T-cell (primary cell): ENCODE measurements at regions of chr17 and their contacts with region 1.

Region 1: GRCh38 chr17:75109407-75110233 is at the start of gene ARMC7:
- DNase-seq: peak; percentile 77 to 94 (median 86)
- ATAC-seq: peak; percentile 83 to 84 (median 84)
- H3K4me3 ChIP-seq: peak within 1 kb of the TSS; percentile 71 to 85
- H3K4me3 Mint-ChIP-seq: peak within 1 kb of the TSS; percentile 83 to 88 (median 87)
- H3K27ac ChIP-seq: peak within 1 kb of the TSS; percentile 65
- H3K27ac Mint-ChIP-seq: peak within 1 kb of the TSS; percentile 91 to 93
- H3K4me1 ChIP-seq: peaks cover 13 to 43% of the 10 kb centered on the region in 2 experiments
- H3K4me1 Mint-ChIP-seq: peaks cover 37 to 41% (median 39%) of the 10 kb centered on the region in 3 donors
- H3K27me3 ChIP-seq: no peaks in the 10 kb centered on the region
- H3K27me3 Mint-ChIP-seq: no peaks in the 10 kb centered on the region
- total RNA-seq, gene ARMC7: 8.9 to 23.9 (median 18.8) TPM

Region 2: GRCh38 chr17:75012346-75013091 is 97.1 kb before region 1 on chr17 and contains the start of gene MRPL58:
- CTCF ChIA-PET with region 1: interaction called in 1 of 2 experiments, 11 read pairs
- POLR2A ChIA-PET with region 1: no interaction called
- DNase-seq: peak; percentile 56 to 87 (median 73)
- ATAC-seq: peak; percentile 94 to 98 (median 96)
- H3K4me3 ChIP-seq: peak within 1 kb of the TSS; percentile 67 to 94
- H3K4me3 Mint-ChIP-seq: peak within 1 kb of the TSS; percentile 92 to 94 (median 93)
- H3K27ac ChIP-seq: peak within 1 kb of the TSS; percentile 72
- H3K27ac Mint-ChIP-seq: peak within 1 kb of the TSS; percentile 85 to 86
- H3K4me1 ChIP-seq: peaks cover 6 to 20% of the 10 kb centered on the region in 2 experiments
- H3K4me1 Mint-ChIP-seq: peaks cover 33 to 39% (median 39%) of the 10 kb centered on the region in 3 donors
- H3K27me3 ChIP-seq: peaks cover 0 to 4% of the 10 kb centered on the region in 2 experiments
- H3K27me3 Mint-ChIP-seq: no peaks in the 10 kb centered on the region
- total RNA-seq, gene MRPL58: 15.6 to 30.6 (median 26.6) TPM

Region 3: GRCh38 chr17:75059369-75060345 is 50.0 kb before region 1 on chr17:
- CTCF ChIA-PET with region 1: interaction called, 7 to 11 read pairs
- POLR2A ChIA-PET with region 1: interaction called in 1 of 2 experiments, 9 read pairs
- DNase-seq: peak in 2 of 35 experiments; percentile 17 to 51
- ATAC-seq: peak; percentile 70 to 92 (median 74)
- H3K4me3 ChIP-seq: no peak overlapping the region
- H3K4me3 Mint-ChIP-seq: no peak overlapping the region
- H3K27ac ChIP-seq: no peak overlapping the region
- H3K27ac Mint-ChIP-seq: peak overlapping the region; percentile 46 to 61
- H3K4me1 ChIP-seq: no peaks in the 10 kb centered on the region
- H3K4me1 Mint-ChIP-seq: peaks cover 10 to 18% (median 12%) of the 10 kb centered on the region in 3 donors
- H3K27me3 ChIP-seq: no peaks in the 10 kb centered on the region
- H3K27me3 Mint-ChIP-seq: no peaks in the 10 kb centered on the region

Region 4: GRCh38 chr17:75131280-75132017 is 21.8 kb after region 1 on chr17 and contains the start of gene NT5C:
- CTCF ChIA-PET with region 1: interaction called, 7 to 13 read pairs
- POLR2A ChIA-PET with region 1: interaction called, 5 to 11 read pairs
- DNase-seq: peak in 25 of 35 experiments; percentile 12 to 73 (median 39)
- ATAC-seq: peak; percentile 79 to 84 (median 83)
- H3K4me3 ChIP-seq: peak within 1 kb of the TSS; percentile 78 to 82
- H3K4me3 Mint-ChIP-seq: peak within 1 kb of the TSS; percentile 84 to 89 (median 87)
- H3K27ac ChIP-seq: peak within 1 kb of the TSS; percentile 80
- H3K27ac Mint-ChIP-seq: peak within 1 kb of the TSS; percentile 89 to 91
- H3K4me1 ChIP-seq: peaks cover 0 to 35% of the 10 kb centered on the region in 2 experiments
- H3K4me1 Mint-ChIP-seq: peaks cover 14 to 20% (median 15%) of the 10 kb centered on the region in 3 donors
- H3K27me3 ChIP-seq: no peaks in the 10 kb centered on the region
- H3K27me3 Mint-ChIP-seq: no peaks in the 10 kb centered on the region
- total RNA-seq, gene NT5C: 21.5 to 88.8 (median 70.1) TPM

Region 5: GRCh38 chr17:75173526-75173925 is 63.9 kb after region 1 on chr17:
- CTCF ChIA-PET with region 1: interaction called, 10 to 78 read pairs
- POLR2A ChIA-PET with region 1: interaction called in 1 of 2 experiments, 3 read pairs
- DNase-seq: no peak
- ATAC-seq: no peak
- H3K4me3 ChIP-seq: no peak overlapping the region
- H3K4me3 Mint-ChIP-seq: no peak overlapping the region
- H3K27ac ChIP-seq: no peak overlapping the region
- H3K27ac Mint-ChIP-seq: peak overlapping the region in 1 of 2 donors; percentile 36
- H3K4me1 ChIP-seq: peaks cover 0 to 25% of the 10 kb centered on the region in 2 experiments
- H3K4me1 Mint-ChIP-seq: peaks cover 16 to 24% (median 23%) of the 10 kb centered on the region in 3 donors
- H3K27me3 ChIP-seq: no peaks in the 10 kb centered on the region
- H3K27me3 Mint-ChIP-seq: no peaks in the 10 kb centered on the region

Region 6: DNA sequence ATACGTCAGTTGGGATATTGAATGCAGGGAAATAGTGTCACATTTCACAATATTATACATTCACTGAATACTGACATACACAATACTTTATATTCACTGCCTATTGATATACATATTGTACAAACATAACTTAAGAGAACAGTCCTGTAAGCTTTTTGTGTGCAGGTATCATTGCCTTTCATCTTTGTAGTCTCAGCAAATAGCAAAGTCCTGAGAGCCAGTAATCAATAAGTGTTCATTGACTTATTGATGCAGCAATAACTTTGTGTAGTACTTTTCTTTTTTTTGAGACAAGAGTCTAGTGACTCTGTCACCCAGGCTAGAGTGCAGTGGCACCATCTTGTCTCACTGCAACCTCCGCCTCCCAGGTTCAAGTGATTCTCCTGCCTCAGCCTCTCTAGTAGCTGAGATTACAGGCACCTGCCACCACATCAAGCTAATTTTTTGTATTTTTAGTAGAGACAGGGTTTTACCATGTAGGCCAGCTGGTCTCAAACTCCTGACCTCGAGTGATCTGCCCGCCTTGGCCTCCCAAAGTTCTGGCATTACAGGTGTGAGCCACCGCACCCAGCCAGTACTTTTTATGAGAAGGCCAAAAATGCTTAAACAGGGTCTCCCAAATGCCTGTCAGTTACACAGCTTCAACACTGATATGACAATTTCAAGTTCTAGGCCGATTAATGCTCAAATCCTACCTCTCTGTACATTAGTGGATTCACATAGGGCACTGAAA is 90.4 kb after region 1 on chr17:
- CTCF ChIA-PET with region 1: interaction called, 32 to 73 read pairs
- POLR2A ChIA-PET with region 1: interaction called, 3 to 8 read pairs
- DNase-seq: no peak
- ATAC-seq: no peak
- H3K4me3 ChIP-seq: no peak overlapping the region
- H3K4me3 Mint-ChIP-seq: no peak overlapping the region
- H3K27ac ChIP-seq: no peak overlapping the region
- H3K27ac Mint-ChIP-seq: peak overlapping the region in 1 of 2 donors; percentile 39
- H3K4me1 ChIP-seq: peaks cover 0 to 7% of the 10 kb centered on the region in 2 experiments
- H3K4me1 Mint-ChIP-seq: peaks cover 8 to 15% (median 9%) of the 10 kb centered on the region in 3 donors
- H3K27me3 ChIP-seq: no peaks in the 10 kb centered on the region
- H3K27me3 Mint-ChIP-seq: no peaks in the 10 kb centered on the region

Region 7: GRCh38 chr17:75205037-75205792 is 95.6 kb after region 1 on chr17 and contains the start of gene NUP85:
- CTCF ChIA-PET with region 1: interaction called, 32 to 73 read pairs
- POLR2A ChIA-PET with region 1: interaction called, 3 to 14 read pairs
- DNase-seq: peak; percentile 78 to 95 (median 89)
- ATAC-seq: peak; percentile 85 to 95 (median 92)
- H3K4me3 ChIP-seq: peak within 1 kb of the TSS; percentile 95 to 99
- H3K4me3 Mint-ChIP-seq: peak within 1 kb of the TSS; percentile 93 to 95 (median 94)
- H3K27ac ChIP-seq: peak within 1 kb of the TSS; percentile 91
- H3K27ac Mint-ChIP-seq: peak within 1 kb of the TSS; percentile 99 to 100
- H3K4me1 ChIP-seq: peaks cover 8 to 25% of the 10 kb centered on the region in 2 experiments
- H3K4me1 Mint-ChIP-seq: peaks cover 23 to 37% (median 32%) of the 10 kb centered on the region in 3 donors
- H3K27me3 ChIP-seq: no peaks in the 10 kb centered on the region
- H3K27me3 Mint-ChIP-seq: no peaks in the 10 kb centered on the region
- total RNA-seq, gene NUP85: 56.2 to 128 (median 106) TPM